ENCODE measurements at regions of chr17 and their contacts with region 1.

Region 1: GRCh38 chr17:49715717-49716279 is 8.0 kb upstream of the SLC35B1 start:
- DNase-seq: peak; percentile 32 to 88 (median 62)
- H3K4me3 ChIP-seq: no peak overlapping the region
- H3K4me3 Mint-ChIP-seq: peak overlapping the region; percentile 25 to 82 (median 71)
- H3K27ac ChIP-seq: peak overlapping the region; percentile 86
- H3K27ac Mint-ChIP-seq: peak overlapping the region; percentile 92 to 99 (median 99)
- H3K4me1 ChIP-seq: peaks cover 47% of the 10 kb centered on the region
- H3K4me1 Mint-ChIP-seq: peaks cover 46 to 56% (median 48%) of the 10 kb centered on the region in 3 donors
- H3K27me3 ChIP-seq: no peaks in the 10 kb centered on the region
- H3K27me3 Mint-ChIP-seq: no peaks in the 10 kb centered on the region

Region 2: DNA sequence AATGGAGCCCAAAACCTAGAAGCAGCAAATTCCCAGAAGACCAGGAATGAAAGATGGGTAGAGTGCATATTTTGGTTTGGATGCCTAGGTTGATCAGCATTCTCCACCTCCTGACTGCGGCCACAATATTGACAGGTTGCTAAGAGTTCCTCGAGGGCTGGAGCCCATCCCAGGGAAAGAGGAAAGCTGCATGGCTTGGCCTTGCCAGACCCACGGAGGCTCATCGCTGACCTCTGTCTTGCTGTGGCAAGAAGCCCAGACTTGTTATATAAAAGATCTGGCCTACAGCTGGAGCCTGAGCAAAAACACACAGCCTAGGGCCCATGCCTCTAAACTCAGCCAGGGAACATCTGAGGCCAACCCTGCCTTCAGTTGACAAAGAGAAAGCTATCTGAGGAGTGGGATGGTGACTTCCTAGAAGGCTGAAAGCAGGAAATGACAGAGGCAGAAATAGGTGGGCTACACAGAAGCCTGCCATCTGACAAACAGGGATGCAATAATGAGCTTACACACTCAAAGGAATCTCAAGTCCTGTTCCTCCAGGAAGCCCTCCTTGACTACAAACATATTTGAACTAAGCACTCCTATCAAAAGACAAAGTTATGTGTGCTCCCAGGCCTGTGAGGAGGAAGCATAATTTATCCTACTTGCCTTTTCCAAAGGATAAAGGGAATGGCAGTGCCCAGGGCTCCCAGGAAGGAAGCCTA is 14.4 kb after region 1 on chr17:
- CTCF ChIA-PET with region 1: interaction called, 22 read pairs
- POLR2A ChIA-PET with region 1: no interaction called
- DNase-seq: no peak
- H3K4me3 ChIP-seq: no peak overlapping the region
- H3K4me3 Mint-ChIP-seq: no peak overlapping the region
- H3K27ac ChIP-seq: peak overlapping the region; percentile 8
- H3K27ac Mint-ChIP-seq: peak overlapping the region; percentile 37 to 95 (median 89)
- H3K4me1 ChIP-seq: peaks cover 47% of the 10 kb centered on the region
- H3K4me1 Mint-ChIP-seq: peaks cover 57 to 77% (median 67%) of the 10 kb centered on the region in 3 donors
- H3K27me3 ChIP-seq: no peaks in the 10 kb centered on the region
- H3K27me3 Mint-ChIP-seq: no peaks in the 10 kb centered on the region

Region 3: DNA sequence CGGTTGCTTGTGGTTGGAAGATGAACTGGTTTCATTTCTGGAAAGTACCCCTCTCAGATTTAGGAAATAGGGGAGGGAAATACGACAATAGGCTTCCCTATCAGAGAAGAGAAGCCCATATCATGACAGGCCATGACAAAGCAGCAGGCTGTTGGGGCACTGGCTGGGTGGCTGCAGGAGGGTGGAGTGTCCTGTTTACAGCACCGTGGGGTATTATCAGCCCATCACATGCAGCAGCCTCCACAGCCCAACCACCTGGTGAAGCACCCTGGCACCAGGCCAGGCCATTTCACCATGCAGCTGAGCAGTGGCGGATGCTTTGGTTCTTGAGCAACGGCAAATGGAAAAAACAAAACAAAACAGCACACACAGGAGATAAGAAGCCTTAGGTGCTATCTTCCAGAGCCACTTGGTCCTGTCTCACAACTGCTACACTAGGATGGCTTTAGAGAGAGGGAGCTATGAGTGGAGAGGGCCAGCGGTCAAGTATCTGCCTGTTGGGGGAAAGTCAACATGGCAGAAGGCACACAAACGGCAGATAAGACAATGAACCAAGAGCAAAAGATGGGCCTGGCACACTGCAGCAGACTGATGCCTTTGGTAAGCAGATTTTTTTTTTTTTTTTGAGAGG is 24.0 kb after region 1 on chr17:
- CTCF ChIA-PET with region 1: interaction called, 4 read pairs
- POLR2A ChIA-PET with region 1: interaction called, 15 read pairs
- DNase-seq: peak; percentile 94 to 99 (median 97)
- H3K4me3 ChIP-seq: peak overlapping the region; percentile 81
- H3K4me3 Mint-ChIP-seq: peak overlapping the region; percentile 90 to 98 (median 95)
- H3K27ac ChIP-seq: peak overlapping the region; percentile 88
- H3K27ac Mint-ChIP-seq: peak overlapping the region; percentile 97 to 100 (median 100)
- H3K4me1 ChIP-seq: peaks cover 95% of the 10 kb centered on the region
- H3K4me1 Mint-ChIP-seq: peaks cover 86 to 97% (median 93%) of the 10 kb centered on the region in 3 donors
- H3K27me3 ChIP-seq: no peaks in the 10 kb centered on the region
- H3K27me3 Mint-ChIP-seq: no peaks in the 10 kb centered on the region

Region 4: GRCh38 chr17:49748791-49749190 is 33.0 kb after region 1 on chr17:
- CTCF ChIA-PET with region 1: interaction called, 17 read pairs
- POLR2A ChIA-PET with region 1: interaction called, 6 read pairs
- DNase-seq: peak; percentile 49 to 80 (median 60)
- H3K4me3 ChIP-seq: peak overlapping the region; percentile 26
- H3K4me3 Mint-ChIP-seq: peak overlapping the region; percentile 73 to 83 (median 82)
- H3K27ac ChIP-seq: peak overlapping the region; percentile 52
- H3K27ac Mint-ChIP-seq: peak overlapping the region; percentile 94 to 99 (median 97)
- H3K4me1 ChIP-seq: peaks cover 90% of the 10 kb centered on the region
- H3K4me1 Mint-ChIP-seq: peaks cover 80 to 93% (median 92%) of the 10 kb centered on the region in 3 donors
- H3K27me3 ChIP-seq: no peaks in the 10 kb centered on the region
- H3K27me3 Mint-ChIP-seq: no peaks in the 10 kb centered on the region

Region 5: DNA sequence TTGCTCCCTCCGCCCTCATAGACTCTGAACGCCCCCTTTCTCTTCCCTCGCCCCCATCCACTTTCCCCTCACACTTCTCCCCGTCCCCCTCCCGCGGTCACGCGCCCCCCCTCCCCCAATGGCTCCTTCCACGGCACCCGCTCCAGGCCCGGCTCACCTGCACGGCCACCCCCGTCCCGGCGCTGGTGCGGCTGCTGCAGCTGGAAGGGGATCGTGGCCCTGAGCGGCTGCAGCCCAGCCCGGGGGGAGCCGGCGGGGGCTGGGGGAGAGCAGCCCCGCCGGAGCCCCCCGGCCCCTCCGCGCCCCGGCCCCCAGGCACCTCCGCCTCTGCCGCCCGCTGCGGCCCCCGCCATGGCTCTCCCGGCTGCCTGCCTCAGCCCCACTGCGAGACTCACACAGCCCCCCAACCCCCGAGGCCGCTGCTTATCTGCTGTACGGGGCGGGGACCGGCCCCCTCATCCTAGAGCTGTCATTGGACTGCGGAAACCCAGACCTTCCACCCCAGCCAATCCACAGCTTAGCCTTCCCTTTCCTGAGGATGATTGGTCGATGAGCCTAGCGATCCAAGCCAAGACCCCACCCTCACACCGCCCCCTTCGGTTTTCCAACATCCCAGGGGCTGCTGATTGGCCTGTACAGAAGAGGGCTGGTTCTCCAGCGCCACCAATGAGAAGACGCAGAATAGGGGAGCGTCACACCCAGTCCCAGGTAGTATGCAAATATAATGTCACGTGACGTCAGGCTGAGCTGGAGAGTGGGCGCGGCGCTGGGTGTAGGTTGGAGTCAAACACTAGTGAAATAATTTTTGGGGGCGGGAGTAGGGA is 48.1 kb after region 1 on chr17 and contains the start of gene FAM117A:
- CTCF ChIA-PET with region 1: interaction called, 9 read pairs
- POLR2A ChIA-PET with region 1: interaction called, 27 read pairs
- DNase-seq: peak; percentile 90 to 99 (median 98)
- H3K4me3 ChIP-seq: peak within 1 kb of the TSS; percentile 82
- H3K4me3 Mint-ChIP-seq: peak within 1 kb of the TSS; percentile 82 to 100 (median 98)
- H3K27ac ChIP-seq: peak within 1 kb of the TSS; percentile 66
- H3K27ac Mint-ChIP-seq: peak within 1 kb of the TSS; percentile 43 to 99 (median 96)
- H3K4me1 ChIP-seq: peaks cover 39% of the 10 kb centered on the region
- H3K4me1 Mint-ChIP-seq: peaks cover 47 to 56% (median 51%) of the 10 kb centered on the region in 3 donors
- H3K27me3 ChIP-seq: no peaks in the 10 kb centered on the region
- H3K27me3 Mint-ChIP-seq: peaks cover 0 to 3% of the 10 kb centered on the region in 2 donors
- total RNA-seq, gene FAM117A: 21.8 to 24.8 TPM

Region 6: GRCh38 chr17:49779739-49780231 is 64.0 kb after region 1 on chr17:
- CTCF ChIA-PET with region 1: interaction called, 13 read pairs
- POLR2A ChIA-PET with region 1: interaction called, 4 read pairs
- DNase-seq: peak in 1 of 5 donors; percentile 13
- H3K4me3 ChIP-seq: no peak overlapping the region
- H3K4me3 Mint-ChIP-seq: no peak overlapping the region
- H3K27ac ChIP-seq: no peak overlapping the region
- H3K27ac Mint-ChIP-seq: peak overlapping the region in 1 of 8 donors; percentile 43
- H3K4me1 ChIP-seq: no peaks in the 10 kb centered on the region
- H3K4me1 Mint-ChIP-seq: peaks cover 7 to 9% (median 8%) of the 10 kb centered on the region in 3 donors
- H3K27me3 ChIP-seq: no peaks in the 10 kb centered on the region
- H3K27me3 Mint-ChIP-seq: peaks cover 0 to 4% of the 10 kb centered on the region in 2 donors